Activated naive CD4-positive, alpha-beta T cell treated with anti-CD3 and anti-CD28 coated beads for 36 hours (primary cell): ENCODE measurements at regions of chr14 and their contacts with region 1.

Region 1: DNA sequence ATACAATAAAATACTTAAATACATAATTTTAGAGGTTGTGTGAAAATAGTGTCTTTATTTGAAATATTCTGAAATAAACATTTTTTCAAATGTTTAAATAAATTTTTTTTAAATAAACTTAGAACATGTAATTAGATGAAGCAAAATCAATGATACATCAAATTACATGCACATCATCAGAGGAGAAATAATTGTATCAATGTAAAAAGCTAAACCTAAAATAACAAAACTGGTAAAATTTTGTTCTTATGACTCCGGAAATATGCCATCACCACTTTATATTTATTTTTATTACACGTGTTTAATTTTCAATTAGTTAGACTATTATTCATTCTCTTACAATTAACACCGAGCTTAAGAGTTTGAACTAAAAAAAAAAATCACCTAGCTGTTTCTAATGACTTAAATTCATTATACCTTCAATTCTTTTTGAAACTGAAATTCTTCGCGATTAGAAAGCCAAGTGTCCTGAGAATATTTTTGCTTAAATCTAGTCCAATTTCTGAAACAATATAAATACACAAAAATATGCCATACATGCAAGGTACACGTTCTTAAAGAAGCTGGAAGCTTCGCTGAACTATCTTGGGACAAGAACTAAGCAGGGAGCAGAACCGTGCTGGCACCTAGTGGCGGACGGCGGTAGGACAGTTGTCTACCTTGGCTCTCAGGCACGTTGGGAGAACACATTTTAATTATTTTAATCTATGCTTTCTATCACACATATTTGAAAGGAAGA is 230.5 kb downstream of the SLC25A21 start:
- DNase-seq: peak; percentile 75
- H3K4me3 Mint-ChIP-seq: no peak overlapping the region
- H3K27ac Mint-ChIP-seq: no peak overlapping the region
- H3K4me1 Mint-ChIP-seq: no peaks in the 10 kb centered on the region
- H3K27me3 Mint-ChIP-seq: peaks cover 4% of the 10 kb centered on the region

Region 2: GRCh38 chr14:35883677-35884293 is 1058.2 kb before region 1 on chr14:
- CTCF ChIA-PET with region 1: no interaction called
- intact Hi-C with region 1: loop called (anchors 10 kb)
- DNase-seq: peak; percentile 55
- H3K4me3 Mint-ChIP-seq: no peak overlapping the region
- H3K27ac Mint-ChIP-seq: no peak overlapping the region
- H3K4me1 Mint-ChIP-seq: no peaks in the 10 kb centered on the region
- H3K27me3 Mint-ChIP-seq: peaks cover 2% of the 10 kb centered on the region

Region 3: DNA sequence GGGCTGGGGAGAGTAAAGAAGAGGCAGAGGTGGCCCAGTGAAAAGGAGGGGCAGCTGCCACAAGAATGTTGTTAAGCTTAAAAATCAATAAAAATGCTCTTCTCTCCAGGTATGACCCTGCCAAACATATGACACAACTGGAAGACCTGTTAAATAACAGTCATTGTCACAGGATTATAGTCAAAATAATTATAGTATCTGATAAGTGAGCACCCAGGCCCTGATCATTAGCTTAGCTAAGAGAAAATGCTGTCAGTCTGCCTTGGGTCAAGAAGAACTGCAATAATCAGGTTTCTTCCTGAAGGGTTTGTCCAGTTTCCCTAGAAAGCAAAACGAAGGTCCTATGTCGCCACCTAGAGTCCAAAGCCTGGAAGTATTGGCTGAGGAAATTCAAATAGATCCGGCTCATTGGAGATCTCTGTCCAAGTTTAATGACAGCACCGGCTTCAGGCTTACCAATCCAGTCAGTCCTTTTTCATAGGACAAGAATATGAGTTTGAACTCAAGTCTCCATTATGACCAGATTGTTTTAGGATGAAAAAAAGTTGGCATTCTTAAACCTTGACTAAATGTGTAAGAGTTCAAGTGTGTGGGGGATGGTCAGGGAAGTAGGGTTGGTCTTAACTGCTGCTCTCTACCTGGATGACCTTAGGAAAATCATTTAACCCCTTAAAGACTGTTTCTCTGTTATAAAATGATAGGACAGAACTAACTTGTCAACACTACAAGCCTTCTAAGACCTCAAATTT is 337.0 kb before region 1 on chr14:
- CTCF ChIA-PET with region 1: no interaction called
- intact Hi-C with region 1: loop called (anchors 2 kb)
- DNase-seq: peak; percentile 69
- H3K4me3 Mint-ChIP-seq: no peak overlapping the region
- H3K27ac Mint-ChIP-seq: no peak overlapping the region
- H3K4me1 Mint-ChIP-seq: no peaks in the 10 kb centered on the region
- H3K27me3 Mint-ChIP-seq: peaks cover 13% of the 10 kb centered on the region

Region 4: DNA sequence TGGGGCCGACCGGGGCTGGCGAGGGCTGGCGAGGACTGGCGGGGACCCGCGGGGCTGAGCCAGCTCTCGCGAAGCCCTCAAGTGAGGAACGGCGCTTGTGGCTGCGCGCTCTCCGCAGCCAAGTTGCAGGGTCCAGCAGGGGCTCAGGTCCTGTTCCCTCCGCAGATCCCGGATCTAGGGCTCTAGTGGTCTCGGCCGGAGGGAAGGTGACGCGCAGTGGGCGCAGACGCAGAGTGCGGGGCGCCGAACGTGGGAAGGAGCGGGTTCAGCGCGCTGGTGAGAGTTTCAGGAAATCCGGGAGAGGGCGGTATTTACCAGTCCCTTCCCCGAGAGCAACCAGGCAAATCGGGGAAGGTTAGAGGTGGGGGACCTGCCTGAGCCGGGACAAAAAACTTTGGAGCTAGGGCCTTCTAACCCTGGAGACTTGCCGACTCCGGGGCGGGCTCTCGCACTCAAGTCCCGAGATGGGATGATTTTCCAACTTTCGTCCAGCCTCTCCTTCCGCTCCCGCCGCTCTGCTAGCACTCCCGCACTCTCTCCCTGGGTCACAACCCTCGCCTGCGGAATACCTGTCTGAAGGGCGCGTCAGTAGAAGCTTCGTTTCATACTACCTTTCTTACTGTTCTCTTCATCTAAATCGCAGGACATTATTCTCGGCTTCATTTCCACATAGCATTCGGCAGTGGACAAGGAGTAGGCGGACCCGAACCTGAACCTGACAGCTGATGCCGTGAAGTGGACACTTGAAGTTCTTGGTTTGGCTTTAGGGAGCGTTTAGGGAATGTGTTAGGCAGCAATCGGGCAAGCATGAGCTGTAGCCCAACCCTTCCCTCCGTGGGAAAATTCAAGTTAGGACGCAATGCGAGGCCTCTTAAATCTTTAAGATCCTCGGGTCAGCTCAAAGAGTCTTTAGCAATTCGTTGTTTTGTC is 293.9 kb before region 1 on chr14:
- CTCF ChIA-PET with region 1: interaction called, 4 read pairs
- intact Hi-C with region 1: loop called (anchors 1 kb)
- DNase-seq: no peak
- H3K4me3 Mint-ChIP-seq: no peak overlapping the region
- H3K27ac Mint-ChIP-seq: no peak overlapping the region
- H3K4me1 Mint-ChIP-seq: peaks cover 5% of the 10 kb centered on the region
- H3K27me3 Mint-ChIP-seq: peaks cover 59% of the 10 kb centered on the region

Region 5: DNA sequence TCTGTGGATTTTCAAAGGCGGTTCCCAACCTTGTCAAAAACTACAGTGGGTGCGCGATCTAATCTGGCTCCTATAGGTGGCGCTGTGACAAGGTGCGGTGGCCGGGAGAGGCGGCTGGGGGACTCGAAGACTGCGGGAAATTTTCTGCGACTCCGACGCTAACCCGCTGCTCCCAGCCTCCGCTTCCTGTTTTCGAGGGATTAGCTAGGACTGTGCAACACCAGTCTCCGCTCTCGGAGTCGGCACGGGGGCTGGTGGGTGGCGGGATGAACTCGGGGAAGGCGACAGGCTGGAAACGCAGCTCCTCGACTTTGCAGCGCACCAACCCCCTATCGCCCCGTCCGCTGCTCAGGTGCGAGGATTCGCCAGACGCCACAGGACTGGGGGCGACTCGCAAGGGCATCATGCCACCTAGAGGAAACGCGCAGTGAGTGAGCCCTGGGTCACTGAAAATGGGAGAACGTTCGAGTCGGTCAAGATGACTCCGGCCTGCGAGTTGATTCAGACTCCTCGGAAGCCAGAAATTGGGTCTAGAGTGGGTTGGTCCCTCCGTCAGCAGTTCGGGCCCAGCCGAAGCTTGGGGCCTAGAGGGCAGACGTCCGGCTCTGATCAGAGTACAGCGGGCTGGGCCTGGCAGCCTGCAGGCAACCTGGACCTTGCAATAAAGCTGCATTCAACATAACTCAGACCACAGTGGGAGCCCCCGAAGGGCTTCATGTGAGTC is 285.8 kb before region 1 on chr14:
- CTCF ChIA-PET with region 1: interaction called, 3 read pairs
- intact Hi-C with region 1: loop called (anchors 2 kb)
- DNase-seq: peak; percentile 62
- H3K4me3 Mint-ChIP-seq: no peak overlapping the region
- H3K27ac Mint-ChIP-seq: no peak overlapping the region
- H3K4me1 Mint-ChIP-seq: peaks cover 27% of the 10 kb centered on the region
- H3K27me3 Mint-ChIP-seq: peaks cover 82% of the 10 kb centered on the region

Region 6: DNA sequence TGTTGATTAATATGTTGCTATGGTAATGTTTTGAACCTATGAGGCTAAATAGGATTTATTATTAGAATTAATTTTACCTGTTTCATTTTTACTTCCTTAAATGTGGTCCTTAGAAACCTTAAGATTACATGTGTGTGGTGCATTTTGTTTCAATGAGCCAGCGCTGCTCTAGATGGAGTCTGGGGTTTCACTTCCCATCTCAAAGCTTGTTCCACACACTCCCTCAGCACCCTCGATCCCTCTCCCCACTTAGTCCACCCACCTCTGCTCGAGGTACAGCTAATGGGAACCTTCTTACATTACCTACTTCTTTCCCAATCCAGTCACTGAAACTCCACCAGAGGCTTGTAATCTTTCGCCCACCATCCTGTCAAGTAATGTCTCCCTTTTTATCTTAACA is 75.1 kb before region 1 on chr14:
- CTCF ChIA-PET with region 1: no interaction called
- intact Hi-C with region 1: no loop called
- DNase-seq: no peak
- H3K4me3 Mint-ChIP-seq: no peak overlapping the region
- H3K27ac Mint-ChIP-seq: no peak overlapping the region
- H3K4me1 Mint-ChIP-seq: no peaks in the 10 kb centered on the region
- H3K27me3 Mint-ChIP-seq: peaks cover 3% of the 10 kb centered on the region

Region 7: DNA sequence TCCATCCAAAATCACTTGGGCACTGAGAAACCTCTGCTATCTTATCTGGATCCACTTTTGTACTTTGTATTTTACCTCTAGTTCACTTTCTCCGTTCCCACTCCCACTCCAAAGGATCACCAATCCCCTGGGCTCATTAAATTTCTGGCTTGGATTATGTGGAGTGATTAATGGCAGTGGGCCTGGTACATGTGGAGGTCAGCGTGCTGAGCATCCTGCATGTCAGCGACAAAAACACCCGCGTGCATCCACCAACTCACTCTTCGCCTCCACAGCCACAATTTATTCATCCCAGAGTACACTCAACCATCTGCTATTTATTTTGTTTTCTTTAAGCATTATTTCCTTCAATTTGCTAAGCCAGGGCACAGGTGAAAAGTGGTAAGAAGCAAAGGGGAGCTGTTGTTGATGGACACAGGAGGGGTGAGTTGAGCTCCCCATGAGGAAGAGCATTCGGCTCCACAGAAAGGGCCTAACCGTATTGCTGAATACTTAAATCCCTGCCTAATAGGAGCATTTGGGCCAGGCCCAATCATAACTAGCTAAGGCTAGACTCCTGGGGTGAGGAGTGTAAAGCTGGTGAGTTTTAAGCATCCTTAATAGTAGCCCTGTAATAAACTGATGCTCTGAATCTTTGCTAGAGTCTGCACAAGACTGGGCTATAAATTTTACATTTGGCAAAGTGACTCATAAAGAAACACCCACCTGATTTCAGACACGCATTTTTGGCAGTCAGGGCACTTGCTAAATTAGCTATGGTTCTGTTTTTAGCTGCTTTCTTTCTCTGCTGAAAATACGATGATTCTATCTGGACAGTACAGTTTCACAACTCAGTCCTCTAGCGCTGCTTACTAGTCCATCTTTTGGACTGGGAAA is 92.7 kb after region 1 on chr14:
- CTCF ChIA-PET with region 1: no interaction called
- intact Hi-C with region 1: no loop called
- DNase-seq: no peak
- H3K4me3 Mint-ChIP-seq: no peak overlapping the region
- H3K27ac Mint-ChIP-seq: no peak overlapping the region
- H3K4me1 Mint-ChIP-seq: no peaks in the 10 kb centered on the region
- H3K27me3 Mint-ChIP-seq: no peaks in the 10 kb centered on the region

Region 8: DNA sequence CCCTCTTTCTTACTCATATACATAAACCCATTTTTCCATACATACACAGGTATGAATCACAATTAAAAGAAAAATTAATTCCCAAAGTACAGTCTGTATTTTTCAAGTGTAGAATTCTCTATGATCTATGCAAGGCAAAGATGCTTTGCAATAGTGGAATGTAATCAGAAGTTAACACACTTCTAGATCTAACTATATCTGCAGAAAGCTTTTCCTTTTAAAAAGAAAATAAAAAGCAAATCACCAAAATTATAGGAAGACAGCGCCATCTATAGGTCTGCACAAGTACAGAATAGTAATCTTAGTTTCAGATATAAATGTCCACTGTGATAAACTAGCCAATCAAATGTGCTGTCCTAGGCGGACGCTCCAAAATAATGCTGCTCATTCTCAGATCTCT is 208.5 kb after region 1 on chr14:
- CTCF ChIA-PET with region 1: no interaction called
- intact Hi-C with region 1: loop called (anchors 1 kb)
- DNase-seq: no peak
- H3K4me3 Mint-ChIP-seq: no peak overlapping the region
- H3K27ac Mint-ChIP-seq: no peak overlapping the region
- H3K4me1 Mint-ChIP-seq: no peaks in the 10 kb centered on the region
- H3K27me3 Mint-ChIP-seq: peaks cover 1% of the 10 kb centered on the region